ENCODE measurements at regions of chr1 and their contacts with region 1.

Region 1: GRCh38 chr1:6794164-6794563 is 8.9 kb downstream of the CAMTA1 start:
- DNase-seq: no peak
- H3K4me3 ChIP-seq: no peak overlapping the region
- H3K27ac ChIP-seq: no peak overlapping the region
- H3K4me1 ChIP-seq: peaks cover 0 to 48% of the 10 kb centered on the region in 2 donors
- H3K27me3 ChIP-seq: no peaks in the 10 kb centered on the region
- CTCF ChIP-seq: peak; percentile 30 to 59 (median 36)

Region 2: GRCh38 chr1:6832531-6833188 is 38.5 kb after region 1 on chr1:
- intact Hi-C with region 1: loop called (anchors 5 kb)
- DNase-seq: no peak
- H3K4me3 ChIP-seq: no peak overlapping the region
- H3K27ac ChIP-seq: peak overlapping the region in 1 of 2 donors; percentile 11
- H3K4me1 ChIP-seq: peaks cover 8 to 20% of the 10 kb centered on the region in 2 donors
- H3K27me3 ChIP-seq: no peaks in the 10 kb centered on the region
- CTCF ChIP-seq: no peak

Region 3: GRCh38 chr1:6889875-6890480 is 95.8 kb after region 1 on chr1:
- intact Hi-C with region 1: loop called (anchors 1 kb)
- DNase-seq: peak in 1 of 2 donors; percentile 78
- H3K4me3 ChIP-seq: no peak overlapping the region
- H3K27ac ChIP-seq: no peak overlapping the region
- H3K4me1 ChIP-seq: peaks cover 0 to 3% of the 10 kb centered on the region in 2 donors
- H3K27me3 ChIP-seq: no peaks in the 10 kb centered on the region
- CTCF ChIP-seq: peak; percentile 64 to 82 (median 70)

Region 4: GRCh38 chr1:6962996-6963911 is 169.1 kb after region 1 on chr1:
- intact Hi-C with region 1: loop called (anchors 5 kb)
- DNase-seq: peak in 1 of 2 donors; percentile 69
- H3K4me3 ChIP-seq: no peak overlapping the region
- H3K27ac ChIP-seq: no peak overlapping the region
- H3K4me1 ChIP-seq: peaks cover 0 to 6% of the 10 kb centered on the region in 2 donors
- H3K27me3 ChIP-seq: peaks cover 10% of the 10 kb centered on the region
- CTCF ChIP-seq: no peak

Region 5: DNA sequence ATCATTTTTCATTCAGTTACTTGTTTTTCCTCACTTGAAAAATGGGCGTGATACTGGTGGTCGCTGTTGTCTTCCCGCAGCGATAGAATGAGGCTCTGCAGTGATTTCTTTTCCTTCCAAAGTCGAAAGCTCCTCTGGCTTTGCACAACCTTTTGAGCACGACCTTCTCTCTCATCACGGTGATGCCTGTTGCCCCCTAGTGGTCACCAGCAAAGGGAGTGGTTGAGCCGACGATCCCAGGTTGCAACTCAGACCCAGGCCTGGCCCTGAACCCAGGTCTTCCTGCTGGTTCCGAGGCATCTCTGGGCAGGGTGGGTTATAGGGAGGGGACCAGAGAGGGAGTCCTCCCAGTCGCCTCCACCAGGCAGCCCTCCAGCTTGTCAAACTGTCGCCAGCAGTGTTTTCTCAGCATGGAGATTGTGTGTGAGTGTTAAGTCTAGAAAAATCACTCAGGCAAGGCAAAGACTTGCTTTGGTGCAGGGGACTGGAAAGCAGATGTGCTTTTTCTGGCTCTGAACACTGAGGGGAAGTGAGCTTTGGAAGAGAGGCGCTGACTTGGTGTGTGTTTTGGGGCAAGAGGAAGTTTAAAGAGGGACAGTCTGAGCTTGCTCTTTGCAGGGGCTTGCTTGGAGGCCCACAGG is 276.3 kb after region 1 on chr1:
- intact Hi-C with region 1: loop called (anchors 1 kb)
- DNase-seq: peak in 1 of 2 donors; percentile 76
- H3K4me3 ChIP-seq: peak overlapping the region; percentile 42 to 51
- H3K27ac ChIP-seq: no peak overlapping the region
- H3K4me1 ChIP-seq: no peaks in the 10 kb centered on the region
- H3K27me3 ChIP-seq: no peaks in the 10 kb centered on the region
- CTCF ChIP-seq: peak; percentile 74 to 85 (median 78)